Body of pancreas (tissue), 4 donors: ENCODE measurements at regions of chr6 and their contacts with region 1.

Region 1: GRCh38 chr6:89610149-89610642 is 28.4 kb downstream of the LYRM2 start:
- DNase-seq: peak; percentile 66 to 77 (median 70)
- ATAC-seq: peak; percentile 58
- H3K4me3 ChIP-seq: no peak overlapping the region
- H3K27ac ChIP-seq: no peak overlapping the region
- H3K4me1 ChIP-seq: no peaks in the 10 kb centered on the region
- H3K27me3 ChIP-seq: no peaks in the 10 kb centered on the region
- CTCF ChIP-seq: peak; percentile 60 to 86 (median 81)
- POLR2A ChIP-seq: no peak

Region 2: GRCh38 chr6:88982720-88983119 is 627.5 kb before region 1 on chr6:
- intact Hi-C with region 1: loop called (anchors 10 kb)
- DNase-seq: peak; percentile 38 to 73 (median 68)
- ATAC-seq: peak; percentile 95
- H3K4me3 ChIP-seq: no peak overlapping the region
- H3K27ac ChIP-seq: peak overlapping the region in 1 of 4 donors; percentile 34
- H3K4me1 ChIP-seq: peaks cover 15% of the 10 kb centered on the region
- H3K27me3 ChIP-seq: no peaks in the 10 kb centered on the region
- CTCF ChIP-seq: peak; percentile 36 to 94 (median 81)
- POLR2A ChIP-seq: no peak

Region 3: GRCh38 chr6:89436226-89436625 is 174.0 kb before region 1 on chr6:
- intact Hi-C with region 1: loop called (anchors 5 kb)
- DNase-seq: no peak
- ATAC-seq: no peak
- H3K4me3 ChIP-seq: no peak overlapping the region
- H3K27ac ChIP-seq: peak overlapping the region in 1 of 4 donors; percentile 40
- H3K4me1 ChIP-seq: peaks cover 22% of the 10 kb centered on the region
- H3K27me3 ChIP-seq: no peaks in the 10 kb centered on the region
- CTCF ChIP-seq: no peak
- POLR2A ChIP-seq: no peak